Gastrocnemius medialis (tissue), 4 donors: ENCODE measurements at regions of chr3 and their contacts with region 1.

Region 1: DNA sequence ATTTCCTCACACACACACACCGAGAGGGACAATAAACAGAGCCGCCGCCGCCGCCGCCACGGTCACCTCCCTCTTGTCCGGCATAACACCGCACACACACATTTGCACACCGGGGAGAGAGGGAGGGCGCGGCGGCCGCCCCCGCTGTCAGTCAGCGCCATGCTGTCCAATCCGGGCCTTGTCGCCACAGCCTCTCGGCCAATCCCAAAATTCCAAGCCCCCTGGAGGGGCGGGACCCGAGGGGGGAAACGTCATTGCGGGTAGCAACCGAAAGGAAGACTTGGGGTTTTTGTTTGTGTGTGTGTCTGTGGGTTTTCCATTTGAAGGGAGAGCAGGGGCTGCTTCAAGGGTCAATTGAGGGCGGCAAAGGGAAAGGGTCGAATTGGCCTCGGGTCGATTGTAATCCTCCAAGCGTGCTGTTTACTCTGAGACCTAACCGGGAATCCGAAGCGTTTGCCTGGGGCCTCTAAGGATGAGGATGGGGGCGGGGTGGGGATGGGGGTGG is at the start of gene TOP2B:
- DNase-seq: peak; percentile 96
- ATAC-seq: peak; percentile 92
- H3K4me3 ChIP-seq: peak within 1 kb of the TSS; percentile 70 to 86 (median 74)
- H3K27ac ChIP-seq: peak within 1 kb of the TSS; percentile 91 to 96 (median 95)
- H3K4me1 ChIP-seq: peaks cover 36 to 44% of the 10 kb centered on the region in 2 donors
- H3K27me3 ChIP-seq: no peaks in the 10 kb centered on the region
- CTCF ChIP-seq: no peak
- POLR2A ChIP-seq: peak; percentile 84 to 97
- total RNA-seq, gene TOP2B: 56.1 to 81.5 (median 64.7) TPM

Region 2: DNA sequence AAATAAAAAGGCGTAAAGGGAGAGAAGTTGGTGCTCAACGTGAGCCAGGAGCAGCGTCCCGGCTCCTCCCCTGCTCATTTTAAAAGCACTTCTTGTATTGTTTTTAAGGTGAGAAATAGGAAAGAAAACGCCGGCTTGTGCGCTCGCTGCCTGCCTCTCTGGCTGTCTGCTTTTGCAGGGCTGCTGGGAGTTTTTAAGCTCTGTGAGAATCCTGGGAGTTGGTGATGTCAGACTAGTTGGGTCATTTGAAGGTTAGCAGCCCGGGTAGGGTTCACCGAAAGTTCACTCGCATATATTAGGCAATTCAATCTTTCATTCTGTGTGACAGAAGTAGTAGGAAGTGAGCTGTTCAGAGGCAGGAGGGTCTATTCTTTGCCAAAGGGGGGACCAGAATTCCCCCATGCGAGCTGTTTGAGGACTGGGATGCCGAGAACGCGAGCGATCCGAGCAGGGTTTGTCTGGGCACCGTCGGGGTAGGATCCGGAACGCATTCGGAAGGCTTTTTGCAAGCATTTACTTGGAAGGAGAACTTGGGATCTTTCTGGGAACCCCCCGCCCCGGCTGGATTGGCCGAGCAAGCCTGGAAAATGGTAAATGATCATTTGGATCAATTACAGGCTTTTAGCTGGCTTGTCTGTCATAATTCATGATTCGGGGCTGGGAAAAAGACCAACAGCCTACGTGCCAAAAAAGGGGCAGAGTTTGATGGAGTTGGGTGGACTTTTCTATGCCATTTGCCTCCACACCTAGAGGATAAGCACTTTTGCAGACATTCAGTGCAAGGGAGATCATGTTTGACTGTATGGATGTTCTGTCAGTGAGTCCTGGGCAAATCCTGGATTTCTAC is 236.7 kb before region 1 on chr3 and contains the start of gene RARB:
- in situ Hi-C with region 1: no loop called
- intact Hi-C with region 1: loop called (anchors 1 kb)
- DNase-seq: peak; percentile 40 to 64
- ATAC-seq: peak; percentile 88 to 94
- H3K4me3 ChIP-seq: peak within 1 kb of the TSS; percentile 64 to 83 (median 72)
- H3K27ac ChIP-seq: peak within 1 kb of the TSS; percentile 80 to 88 (median 82)
- H3K4me1 ChIP-seq: peaks cover 19 to 20% of the 10 kb centered on the region in 2 donors
- H3K27me3 ChIP-seq: no peaks in the 10 kb centered on the region
- CTCF ChIP-seq: no peak
- POLR2A ChIP-seq: peak; percentile 70 to 83
- total RNA-seq, gene RARB: 1.2 to 3.0 (median 1.9) TPM

Region 3: GRCh38 chr3:25782938-25783660 is 118.2 kb after region 1 on chr3 and contains the start of gene NGLY1:
- in situ Hi-C with region 1: loop called in 1 of 4 experiments (anchors 10 kb)
- intact Hi-C with region 1: loop called (anchors 2 kb)
- DNase-seq: peak; percentile 78 to 79
- ATAC-seq: peak; percentile 90 to 92
- H3K4me3 ChIP-seq: peak within 1 kb of the TSS; percentile 87 to 97 (median 94)
- H3K27ac ChIP-seq: peak within 1 kb of the TSS; percentile 91 to 97 (median 94)
- H3K4me1 ChIP-seq: peaks cover 15 to 22% of the 10 kb centered on the region in 2 donors
- H3K27me3 ChIP-seq: no peaks in the 10 kb centered on the region
- CTCF ChIP-seq: peak in 3 of 5 experiments; percentile 27 to 56 (median 29)
- POLR2A ChIP-seq: peak; percentile 90 to 94
- total RNA-seq, gene NGLY1: 61.5 to 73.3 (median 68.6) TPM

Region 4: GRCh38 chr3:25856902-25857518 is 192.1 kb after region 1 on chr3:
- in situ Hi-C with region 1: loop called in 1 of 4 experiments (anchors 25 kb)
- intact Hi-C with region 1: no loop called
- DNase-seq: no peak
- ATAC-seq: no peak
- H3K4me3 ChIP-seq: no peak overlapping the region
- H3K27ac ChIP-seq: no peak overlapping the region
- H3K4me1 ChIP-seq: no peaks in the 10 kb centered on the region
- H3K27me3 ChIP-seq: no peaks in the 10 kb centered on the region
- CTCF ChIP-seq: peak in 4 of 5 experiments; percentile 37 to 60 (median 52)
- POLR2A ChIP-seq: no peak

Region 5: DNA sequence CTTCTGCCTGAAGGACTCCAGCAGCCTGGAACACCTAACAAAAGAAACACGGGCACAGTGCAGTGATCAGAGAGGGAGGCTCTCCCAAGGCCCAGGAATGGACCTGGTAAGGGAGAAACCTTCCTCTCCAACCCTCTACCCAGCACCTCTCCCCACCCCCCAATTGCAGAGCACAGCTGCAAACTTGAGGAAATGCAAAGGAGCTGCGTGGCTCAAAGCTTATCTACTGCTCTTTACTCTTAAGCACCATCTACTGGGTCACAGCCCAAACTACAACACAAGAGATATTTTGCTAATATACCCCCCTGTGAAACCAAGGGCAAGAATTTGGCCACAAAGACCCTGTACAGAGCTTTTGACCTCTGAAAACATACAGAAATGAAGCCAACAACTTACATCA is 453.3 kb after region 1 on chr3:
- in situ Hi-C with region 1: loop called in 2 of 4 experiments (anchors 25 kb)
- intact Hi-C with region 1: no loop called
- DNase-seq: no peak
- ATAC-seq: peak in 1 of 2 donors; percentile 77
- H3K4me3 ChIP-seq: no peak overlapping the region
- H3K27ac ChIP-seq: no peak overlapping the region
- H3K4me1 ChIP-seq: no peaks in the 10 kb centered on the region
- H3K27me3 ChIP-seq: no peaks in the 10 kb centered on the region
- CTCF ChIP-seq: peak in 3 of 5 experiments; percentile 52 to 65 (median 60)
- POLR2A ChIP-seq: no peak

Region 6: GRCh38 chr3:27484015-27484844 is 1819.4 kb after region 1 on chr3 and contains the start of gene SLC4A7:
- in situ Hi-C with region 1: no loop called
- intact Hi-C with region 1: loop called (anchors 10 kb)
- DNase-seq: peak; percentile 95 to 96
- ATAC-seq: peak; percentile 87
- H3K4me3 ChIP-seq: peak within 1 kb of the TSS; percentile 66 to 96 (median 80)
- H3K27ac ChIP-seq: peak within 1 kb of the TSS; percentile 80 to 96 (median 88)
- H3K4me1 ChIP-seq: peaks cover 9 to 28% of the 10 kb centered on the region in 2 donors
- H3K27me3 ChIP-seq: no peaks in the 10 kb centered on the region
- CTCF ChIP-seq: no peak
- POLR2A ChIP-seq: peak; percentile 94 to 97
- total RNA-seq, gene SLC4A7: 7.5 to 19.8 (median 12.8) TPM